Common myeloid progenitor, CD34-positive (primary cell): ENCODE measurements at regions of chr3 and their contacts with region 1.

Region 1: GRCh38 chr3:159828542-159828943 is 160.1 kb upstream of the IL12A start:
- DNase-seq: peak; percentile 66 to 77 (median 76)
- H3K4me3 ChIP-seq: peak overlapping the region in 1 of 7 experiments; percentile 51
- H3K27ac ChIP-seq: no peak overlapping the region
- H3K4me1 ChIP-seq: peaks cover 19 to 59% (median 50%) of the 10 kb centered on the region in 4 experiments
- H3K27me3 ChIP-seq: no peaks in the 10 kb centered on the region

Region 2: GRCh38 chr3:159813822-159814523 is 14.6 kb before region 1 on chr3:
- CTCF ChIA-PET with region 1: interaction called, 21 read pairs
- POLR2A ChIA-PET with region 1: no interaction called
- DNase-seq: no peak
- H3K4me3 ChIP-seq: no peak overlapping the region
- H3K27ac ChIP-seq: no peak overlapping the region
- H3K4me1 ChIP-seq: peaks cover 0 to 13% (median 8%) of the 10 kb centered on the region in 4 experiments
- H3K27me3 ChIP-seq: no peaks in the 10 kb centered on the region

Region 3: GRCh38 chr3:159839561-159840379 is 11.2 kb after region 1 on chr3:
- CTCF ChIA-PET with region 1: interaction called, 22 read pairs
- POLR2A ChIA-PET with region 1: interaction called, 3 read pairs
- DNase-seq: peak; percentile 69 to 85 (median 81)
- H3K4me3 ChIP-seq: peak within 1 kb of the TSS; percentile 28 to 91 (median 75)
- H3K27ac ChIP-seq: peak within 1 kb of the TSS; percentile 14 to 81
- H3K4me1 ChIP-seq: peaks cover 2 to 68% (median 40%) of the 10 kb centered on the region in 4 experiments
- H3K27me3 ChIP-seq: no peaks in the 10 kb centered on the region

Region 4: DNA sequence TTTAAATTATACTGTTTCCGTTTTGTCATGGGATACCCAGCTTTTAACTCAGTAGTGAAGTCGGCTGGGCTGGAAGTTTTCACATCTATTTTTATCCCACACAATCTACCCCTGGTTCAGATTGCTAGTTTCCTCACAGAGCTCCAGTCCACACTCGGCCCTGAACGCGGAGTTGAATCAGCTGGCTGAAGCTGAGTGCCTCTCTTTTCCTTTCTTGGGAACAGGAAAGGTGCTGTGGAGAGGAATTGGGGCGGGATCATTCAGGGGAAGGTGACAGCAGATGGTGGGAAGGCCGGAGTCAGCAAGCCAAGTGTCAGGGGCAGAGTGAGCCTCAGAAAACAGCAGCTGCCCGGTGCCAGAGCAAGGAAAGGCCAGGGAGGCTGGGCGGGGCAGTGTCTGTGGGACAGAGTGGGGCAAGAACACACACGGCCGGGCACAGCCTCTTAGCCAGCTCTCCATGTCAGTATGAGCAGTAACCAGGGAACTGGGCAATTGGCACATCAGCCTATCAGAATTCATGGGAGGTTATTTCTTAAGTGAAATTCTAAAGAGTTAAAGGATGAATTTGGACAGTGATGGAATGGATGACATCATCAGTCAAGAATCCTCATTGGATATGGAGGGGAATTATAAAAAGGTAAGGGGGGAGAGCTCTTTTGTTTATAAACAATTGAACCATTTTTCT is 24.4 kb after region 1 on chr3:
- CTCF ChIA-PET with region 1: interaction called, 243 read pairs
- POLR2A ChIA-PET with region 1: interaction called, 4 read pairs
- DNase-seq: no peak
- H3K4me3 ChIP-seq: peak overlapping the region in 6 of 7 experiments; percentile 32 to 79 (median 62)
- H3K27ac ChIP-seq: peak overlapping the region; percentile 69 to 88
- H3K4me1 ChIP-seq: peaks cover 25 to 88% (median 67%) of the 10 kb centered on the region in 4 experiments
- H3K27me3 ChIP-seq: no peaks in the 10 kb centered on the region

Region 5: DNA sequence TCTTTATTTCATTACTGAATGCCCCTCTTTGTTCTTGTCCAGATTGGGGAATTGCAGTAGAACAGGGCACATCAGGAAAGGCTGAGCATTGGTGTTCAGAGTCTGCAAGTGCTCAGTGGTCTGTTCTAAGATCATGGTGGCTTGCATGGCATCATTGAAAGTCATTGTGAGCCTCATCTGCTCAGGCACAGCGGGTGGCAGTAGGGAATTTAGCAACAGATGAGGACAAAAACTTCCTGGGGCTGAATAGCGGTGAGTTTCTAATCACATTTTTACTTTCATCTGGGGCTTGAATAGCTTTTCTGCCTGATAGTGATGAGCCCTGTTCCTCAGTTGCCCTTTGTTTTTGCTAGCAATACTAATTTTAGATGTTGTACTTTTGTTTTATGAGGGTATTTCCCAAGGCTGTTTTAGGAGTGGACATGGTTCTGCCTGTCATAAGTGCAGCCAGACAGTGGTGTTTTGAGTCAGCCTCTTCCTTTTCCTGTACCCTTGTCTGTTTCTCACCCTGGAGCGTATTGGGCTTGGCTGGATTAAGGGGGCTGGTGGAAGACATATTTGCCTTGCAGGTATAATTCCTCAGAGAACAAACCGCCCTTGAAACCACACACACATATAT is 32.9 kb after region 1 on chr3:
- CTCF ChIA-PET with region 1: interaction called, 243 read pairs
- POLR2A ChIA-PET with region 1: interaction called, 3 read pairs
- DNase-seq: peak in 2 of 3 donors; percentile 65 to 66
- H3K4me3 ChIP-seq: peak overlapping the region in 4 of 7 experiments; percentile 9 to 39 (median 20)
- H3K27ac ChIP-seq: peak overlapping the region in 1 of 2 experiments; percentile 74
- H3K4me1 ChIP-seq: peaks cover 16 to 93% (median 59%) of the 10 kb centered on the region in 4 experiments
- H3K27me3 ChIP-seq: no peaks in the 10 kb centered on the region

Region 6: GRCh38 chr3:159929435-159930141 is 101.0 kb after region 1 on chr3:
- CTCF ChIA-PET with region 1: interaction called, 17 read pairs
- POLR2A ChIA-PET with region 1: no interaction called
- DNase-seq: peak; percentile 95 to 97 (median 97)
- H3K4me3 ChIP-seq: peak overlapping the region in 2 of 7 experiments; percentile 13 to 20
- H3K27ac ChIP-seq: peak overlapping the region in 1 of 2 experiments; percentile 73
- H3K4me1 ChIP-seq: peaks cover 0 to 27% (median 23%) of the 10 kb centered on the region in 4 experiments
- H3K27me3 ChIP-seq: no peaks in the 10 kb centered on the region

Region 7: GRCh38 chr3:159988617-159989271 is 160.2 kb after region 1 on chr3 and contains the start of gene IL12A:
- CTCF ChIA-PET with region 1: interaction called, 14 read pairs
- POLR2A ChIA-PET with region 1: no interaction called
- DNase-seq: peak; percentile 90 to 93 (median 93)
- H3K4me3 ChIP-seq: peak within 1 kb of the TSS; percentile 68 to 93 (median 75)
- H3K27ac ChIP-seq: peak within 1 kb of the TSS; percentile 19 to 35
- H3K4me1 ChIP-seq: peaks cover 1 to 34% (median 20%) of the 10 kb centered on the region in 4 experiments
- H3K27me3 ChIP-seq: no peaks in the 10 kb centered on the region

Region 8: GRCh38 chr3:160061525-160061924 is 233.0 kb after region 1 on chr3:
- CTCF ChIA-PET with region 1: no interaction called
- POLR2A ChIA-PET with region 1: no interaction called
- DNase-seq: peak in 2 of 3 donors; percentile 31 to 44
- H3K4me3 ChIP-seq: no peak overlapping the region
- H3K27ac ChIP-seq: no peak overlapping the region
- H3K4me1 ChIP-seq: peaks cover 0 to 9% (median 2%) of the 10 kb centered on the region in 4 experiments
- H3K27me3 ChIP-seq: no peaks in the 10 kb centered on the region

Region 9: DNA sequence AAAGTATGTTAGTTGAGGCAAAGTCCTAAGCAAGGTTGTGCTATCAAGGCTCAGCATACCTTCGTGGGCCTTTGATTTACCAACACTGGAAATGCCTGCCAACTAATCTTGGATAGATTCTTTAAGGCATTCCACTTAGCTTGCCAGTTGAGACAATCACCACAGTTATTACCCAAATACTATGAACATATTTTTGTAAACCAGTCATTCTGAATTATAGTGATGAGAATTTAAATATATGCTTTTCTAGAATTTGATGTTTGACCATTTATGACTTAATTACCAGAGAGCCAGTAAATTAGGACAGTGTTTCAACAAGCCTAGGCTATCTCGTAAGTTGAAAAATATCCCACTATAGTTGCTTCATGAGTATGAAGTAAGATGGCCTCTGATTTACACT is 605.5 kb after region 1 on chr3:
- CTCF ChIA-PET with region 1: no interaction called
- POLR2A ChIA-PET with region 1: no interaction called
- DNase-seq: no peak
- H3K4me3 ChIP-seq: no peak overlapping the region
- H3K27ac ChIP-seq: peak overlapping the region in 1 of 2 experiments; percentile 18
- H3K4me1 ChIP-seq: no peaks in the 10 kb centered on the region
- H3K27me3 ChIP-seq: no peaks in the 10 kb centered on the region